ENCODE measurements at regions of chr12 and their contacts with region 1.

Region 1: GRCh38 chr12:108562348-108563135 is at the start of gene ISCU:
- DNase-seq: peak; percentile 79 to 97
- H3K4me3 ChIP-seq: peak within 1 kb of the TSS; percentile 96
- H3K27ac ChIP-seq: peak within 1 kb of the TSS; percentile 90 to 95
- H3K4me1 ChIP-seq: peaks cover 7 to 37% of the 10 kb centered on the region in 2 donors
- H3K27me3 ChIP-seq: no peaks in the 10 kb centered on the region
- CTCF ChIP-seq: no peak
- total RNA-seq, gene ISCU: 136 TPM

Region 2: DNA sequence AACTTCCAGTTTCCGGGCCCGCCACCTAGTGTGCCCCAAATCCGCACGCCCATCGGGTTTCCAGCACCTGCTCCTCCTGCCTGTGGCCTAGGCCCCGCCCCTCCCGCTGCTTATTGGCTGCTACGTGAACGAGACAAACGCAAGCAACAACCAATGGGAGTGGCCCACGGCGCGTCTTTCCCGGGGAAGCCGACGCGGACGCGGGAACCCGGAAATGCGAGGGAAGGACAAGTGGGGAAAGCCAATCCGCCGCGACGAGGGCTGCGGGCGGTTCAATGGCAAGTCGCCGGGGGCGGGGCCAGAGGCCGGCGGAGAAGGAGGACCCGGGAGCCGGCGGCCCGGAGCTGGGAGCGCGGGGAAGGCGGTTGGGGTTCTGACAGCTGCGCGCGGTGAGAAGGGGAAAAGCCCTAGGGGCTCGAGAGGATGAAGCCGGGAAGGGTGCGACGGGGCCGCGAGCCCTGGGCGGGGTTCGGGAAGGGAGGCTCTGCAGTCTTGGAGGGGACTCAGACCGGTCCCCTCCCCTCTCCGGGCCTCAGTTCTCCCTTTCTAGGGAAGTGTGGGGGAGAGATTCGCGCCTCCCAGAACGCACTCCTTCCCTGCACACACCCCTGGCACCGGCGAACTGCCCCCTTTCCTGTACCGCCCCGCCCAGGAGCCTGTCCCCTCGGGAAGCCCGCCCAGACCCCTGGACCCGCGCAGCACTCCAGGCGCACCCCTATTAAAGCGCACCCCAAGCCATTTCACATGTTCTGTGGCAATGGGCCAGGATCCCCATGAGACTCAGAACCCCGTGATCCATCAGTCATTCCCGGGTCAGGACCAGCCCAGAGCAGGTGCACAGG is 47.3 kb before region 1 on chr12 and contains the start of gene FICD:
- intact Hi-C with region 1: loop called (anchors 1 kb)
- DNase-seq: peak; percentile 99 to 100
- H3K4me3 ChIP-seq: peak within 1 kb of the TSS; percentile 80 to 97
- H3K27ac ChIP-seq: peak within 1 kb of the TSS; percentile 71 to 76
- H3K4me1 ChIP-seq: peaks cover 6 to 10% of the 10 kb centered on the region in 2 donors
- H3K27me3 ChIP-seq: no peaks in the 10 kb centered on the region
- CTCF ChIP-seq: no peak
- total RNA-seq, gene FICD: 30.8 TPM

Region 3: GRCh38 chr12:108664338-108665258 is 102.1 kb after region 1 on chr12:
- intact Hi-C with region 1: loop called (anchors 2 kb)
- DNase-seq: peak; percentile 41 to 96
- H3K4me3 ChIP-seq: peak overlapping the region in 1 of 2 donors; percentile 40
- H3K27ac ChIP-seq: peak overlapping the region; percentile 74 to 91
- H3K4me1 ChIP-seq: peaks cover 11 to 55% of the 10 kb centered on the region in 2 donors
- H3K27me3 ChIP-seq: no peaks in the 10 kb centered on the region
- CTCF ChIP-seq: peak; percentile 93 to 95 (median 95)

Region 4: GRCh38 chr12:108803428-108804105 is 241.0 kb after region 1 on chr12:
- intact Hi-C with region 1: loop called (anchors 2 kb)
- DNase-seq: peak in 1 of 2 donors; percentile 94
- H3K4me3 ChIP-seq: no peak overlapping the region
- H3K27ac ChIP-seq: peak overlapping the region; percentile 92 to 95
- H3K4me1 ChIP-seq: peaks cover 20 to 47% of the 10 kb centered on the region in 2 donors
- H3K27me3 ChIP-seq: no peaks in the 10 kb centered on the region
- CTCF ChIP-seq: peak; percentile 94 to 95 (median 94)

Region 5: DNA sequence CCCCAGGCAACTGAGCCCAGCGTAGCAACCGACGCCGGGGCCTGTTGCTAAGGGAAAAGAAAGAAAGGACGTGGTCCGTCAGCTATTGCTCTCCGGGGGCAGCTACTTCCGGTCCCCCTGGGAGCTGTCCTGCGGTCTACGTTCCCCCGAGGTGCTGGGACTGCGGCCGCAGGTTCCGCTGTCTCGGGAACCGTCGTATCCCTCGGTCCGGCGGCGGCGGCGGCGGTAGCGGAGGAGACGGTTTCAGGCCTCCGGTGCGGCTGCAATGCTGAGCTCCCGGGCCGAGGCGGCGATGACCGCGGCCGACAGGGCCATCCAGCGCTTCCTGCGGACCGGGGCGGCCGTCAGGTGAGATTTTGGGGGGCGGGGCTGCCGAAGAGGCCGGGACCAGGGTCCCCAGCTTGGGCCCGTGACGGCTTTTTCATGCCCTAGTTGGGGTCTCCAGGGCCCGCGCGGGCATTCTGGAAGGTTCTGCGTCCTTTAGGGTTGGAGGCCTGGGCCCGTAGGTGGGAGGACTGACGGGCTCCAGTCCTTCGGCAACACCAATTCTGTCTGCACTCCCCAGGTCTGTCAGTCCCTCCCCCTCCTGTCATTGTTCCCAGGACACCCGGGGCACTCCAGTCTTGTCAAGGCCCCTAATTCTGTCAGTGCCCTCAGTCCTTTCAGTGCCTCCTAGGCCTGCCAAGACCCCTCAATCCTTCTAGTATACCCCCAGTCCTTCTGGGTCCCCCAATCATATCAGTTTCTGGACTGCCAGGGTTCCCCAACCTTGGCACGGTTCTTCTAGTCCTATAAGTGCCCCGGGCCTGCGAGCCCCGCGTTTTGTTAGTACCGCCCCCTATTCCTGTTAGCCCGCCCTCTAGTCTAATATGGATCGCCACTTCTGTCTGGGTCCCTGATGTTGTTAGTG is 490.1 kb after region 1 on chr12 and contains the start of gene USP30:
- intact Hi-C with region 1: loop called (anchors 5 kb)
- DNase-seq: peak; percentile 25 to 88
- H3K4me3 ChIP-seq: peak within 1 kb of the TSS; percentile 71 to 96
- H3K27ac ChIP-seq: peak within 1 kb of the TSS; percentile 67 to 81
- H3K4me1 ChIP-seq: peaks cover 0 to 15% of the 10 kb centered on the region in 2 donors
- H3K27me3 ChIP-seq: no peaks in the 10 kb centered on the region
- CTCF ChIP-seq: no peak
- total RNA-seq, gene USP30: 36.0 TPM

Region 6: GRCh38 chr12:109154451-109155438 is 592.2 kb after region 1 on chr12:
- intact Hi-C with region 1: loop called (anchors 5 kb)
- DNase-seq: peak; percentile 63 to 90
- H3K4me3 ChIP-seq: peak overlapping the region; percentile 76 to 94
- H3K27ac ChIP-seq: peak overlapping the region; percentile 77 to 86
- H3K4me1 ChIP-seq: peaks cover 0 to 4% of the 10 kb centered on the region in 2 donors
- H3K27me3 ChIP-seq: no peaks in the 10 kb centered on the region
- CTCF ChIP-seq: peak in 1 of 3 experiments; percentile 4

Measured in ascending aorta (tissue), 2 donors.